Gastrocnemius medialis (tissue), 4 donors: ENCODE measurements at regions of chr9 and their contacts with region 1.

Region 1: DNA sequence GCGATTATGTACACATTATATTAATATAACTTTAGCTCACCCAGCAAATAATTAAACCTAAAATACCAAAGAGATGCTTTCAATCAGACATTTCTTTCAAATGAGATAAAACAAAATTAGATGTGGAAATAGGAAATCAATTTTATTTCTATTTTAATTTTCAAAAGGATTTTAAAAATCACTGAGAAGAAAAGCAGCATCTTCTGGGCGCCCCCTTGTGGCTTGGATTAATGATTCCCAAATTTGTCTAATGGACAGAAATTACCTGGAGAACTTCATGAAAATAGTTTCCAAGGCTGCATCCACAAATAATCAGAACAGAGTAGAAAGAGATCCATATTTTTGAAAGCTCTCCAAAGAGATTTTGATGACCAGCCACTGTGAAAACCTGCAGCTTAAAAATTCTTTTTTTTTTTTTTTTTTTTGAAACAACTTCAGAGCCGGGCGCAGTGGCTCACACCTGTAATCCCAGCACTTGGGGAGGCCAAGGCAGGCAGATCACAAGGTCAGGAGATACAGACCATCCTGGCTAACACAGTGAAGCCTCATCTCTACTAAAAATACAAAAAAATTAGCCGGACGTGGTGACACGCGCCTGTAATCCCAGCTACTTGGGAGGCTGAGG is 50.9 kb upstream of the CEMIP2 start:
- DNase-seq: no peak
- ATAC-seq: no peak
- H3K4me3 ChIP-seq: no peak overlapping the region
- H3K27ac ChIP-seq: no peak overlapping the region
- H3K4me1 ChIP-seq: peaks cover 0 to 3% of the 10 kb centered on the region in 2 donors
- H3K27me3 ChIP-seq: no peaks in the 10 kb centered on the region
- CTCF ChIP-seq: peak; percentile 47 to 74 (median 57)
- POLR2A ChIP-seq: no peak

Region 2: DNA sequence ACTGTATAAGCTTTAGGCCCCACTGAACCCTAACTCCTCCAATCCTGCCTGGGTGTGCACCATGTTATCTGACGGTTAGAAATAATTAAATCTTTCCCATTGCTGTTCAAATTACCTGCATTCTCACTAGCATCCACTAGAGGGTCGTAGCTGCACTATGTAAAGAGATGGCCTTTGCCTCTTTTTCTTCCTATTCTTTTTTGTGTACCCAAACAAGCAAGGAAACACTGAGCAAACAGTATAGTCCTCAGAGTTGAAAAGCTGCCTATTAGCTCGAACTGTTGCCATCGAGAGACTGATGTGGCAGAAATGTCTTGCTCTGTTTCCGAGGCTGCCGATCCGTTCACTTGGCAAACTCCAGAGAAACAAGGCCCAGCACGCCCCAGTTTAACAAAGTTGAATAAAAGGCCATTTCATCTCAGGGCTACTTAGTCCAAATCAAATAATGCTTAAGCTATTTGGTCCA is 534.0 kb before region 1 on chr9:
- in situ Hi-C with region 1: loop called in 2 of 4 experiments (anchors 25 kb)
- intact Hi-C with region 1: loop called (anchors 5 kb)
- DNase-seq: no peak
- ATAC-seq: peak; percentile 70 to 83
- H3K4me3 ChIP-seq: no peak overlapping the region
- H3K27ac ChIP-seq: no peak overlapping the region
- H3K4me1 ChIP-seq: peaks cover 0 to 5% of the 10 kb centered on the region in 2 donors
- H3K27me3 ChIP-seq: no peaks in the 10 kb centered on the region
- CTCF ChIP-seq: peak; percentile 60 to 81 (median 68)
- POLR2A ChIP-seq: no peak

Region 3: DNA sequence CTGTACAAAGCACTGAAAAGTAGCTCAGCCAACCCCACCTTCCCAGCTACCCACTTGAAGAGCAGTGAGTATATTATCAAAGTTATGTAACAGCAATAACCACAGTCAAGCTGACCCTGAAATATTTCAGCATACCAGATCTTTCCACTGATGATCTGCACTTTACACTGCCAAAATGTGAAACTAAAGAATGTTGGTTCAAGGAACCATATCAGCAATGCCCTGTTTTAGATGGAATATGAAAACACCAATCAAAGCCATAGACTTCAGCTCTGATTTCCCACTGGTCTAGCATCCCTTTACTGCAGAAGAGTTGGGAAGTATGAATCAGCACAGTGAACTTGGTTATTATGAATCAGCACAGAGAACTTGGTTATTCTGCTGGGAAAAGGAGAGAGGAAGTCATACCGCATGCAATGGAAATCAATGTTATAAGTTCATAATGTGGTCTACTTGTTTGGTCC is 70.9 kb before region 1 on chr9:
- in situ Hi-C with region 1: no loop called
- intact Hi-C with region 1: no loop called
- DNase-seq: no peak
- ATAC-seq: no peak
- H3K4me3 ChIP-seq: no peak overlapping the region
- H3K27ac ChIP-seq: no peak overlapping the region
- H3K4me1 ChIP-seq: peaks cover 3 to 9% of the 10 kb centered on the region in 2 donors
- H3K27me3 ChIP-seq: no peaks in the 10 kb centered on the region
- CTCF ChIP-seq: no peak
- POLR2A ChIP-seq: no peak